WTC11 (cell line): ENCODE measurements at regions of chr2 and their contacts with region 1.

Region 1: DNA sequence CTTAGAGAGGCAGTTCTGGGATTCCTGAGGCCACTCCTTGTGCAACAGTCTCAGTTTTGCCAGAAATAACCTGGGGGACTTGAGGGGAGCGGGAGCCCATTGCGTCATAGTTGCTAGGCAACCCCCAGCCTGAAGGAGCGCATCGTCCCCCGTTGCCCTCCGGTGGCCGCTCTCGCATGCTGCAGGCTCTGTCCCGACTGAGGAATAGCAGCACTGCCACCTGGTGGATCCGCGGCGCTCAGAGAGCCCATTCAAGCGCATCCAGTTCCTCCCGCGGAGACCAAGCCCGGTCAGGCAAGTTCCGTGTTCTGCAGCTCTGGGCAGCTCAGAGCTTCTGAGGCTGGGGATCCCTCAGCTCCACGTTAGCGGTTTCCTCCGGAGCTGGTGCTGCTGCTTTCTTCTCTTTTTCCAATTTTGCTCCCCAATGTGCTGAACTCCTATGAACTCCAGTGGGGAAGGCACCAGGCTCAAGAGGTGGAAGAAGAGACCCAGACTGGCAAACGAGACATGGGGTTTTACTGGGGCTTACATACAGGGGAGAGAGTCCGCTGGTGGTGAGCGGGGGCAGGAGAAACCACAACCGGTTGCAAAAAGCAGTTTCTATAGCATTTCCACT is 15.1 kb downstream of the SLC4A3 start:
- DNase-seq: peak; percentile 99
- ATAC-seq: peak; percentile 91
- H3K4me3 Mint-ChIP-seq: peak overlapping the region; percentile 26; the same call in 1 of the 2 replicates
- H3K27ac Mint-ChIP-seq: no peak overlapping the region
- H3K4me1 Mint-ChIP-seq: peaks cover 27% of the 10 kb centered on the region
- H3K27me3 Mint-ChIP-seq: peaks cover 6% of the 10 kb centered on the region; the same call in 1 of the 2 replicates
- CTCF ChIP-seq: peak; percentile 88

Region 2: GRCh38 chr2:219430633-219431615 is 211.6 kb before region 1 on chr2:
- CTCF ChIA-PET with region 1: no interaction called
- POLR2A ChIA-PET with region 1: no interaction called
- DNase-seq: no peak
- ATAC-seq: peak; percentile 36
- H3K4me3 Mint-ChIP-seq: no peak overlapping the region
- H3K27ac Mint-ChIP-seq: peak overlapping the region; percentile 69; the same call in 1 of the 2 replicates
- H3K4me1 Mint-ChIP-seq: peaks cover 8% of the 10 kb centered on the region
- H3K27me3 Mint-ChIP-seq: peaks cover 20% of the 10 kb centered on the region
- CTCF ChIP-seq: no peak

Region 3: GRCh38 chr2:219537657-219538488 is 104.7 kb before region 1 on chr2:
- CTCF ChIA-PET with region 1: interaction called, 17 read pairs
- POLR2A ChIA-PET with region 1: no interaction called
- DNase-seq: peak; percentile 51
- ATAC-seq: peak; percentile 38
- H3K4me3 Mint-ChIP-seq: no peak overlapping the region
- H3K27ac Mint-ChIP-seq: no peak overlapping the region
- H3K4me1 Mint-ChIP-seq: peaks cover 27% of the 10 kb centered on the region
- H3K27me3 Mint-ChIP-seq: no peaks in the 10 kb centered on the region; the same call in none of the 2 replicates
- CTCF ChIP-seq: no peak

Region 4: DNA sequence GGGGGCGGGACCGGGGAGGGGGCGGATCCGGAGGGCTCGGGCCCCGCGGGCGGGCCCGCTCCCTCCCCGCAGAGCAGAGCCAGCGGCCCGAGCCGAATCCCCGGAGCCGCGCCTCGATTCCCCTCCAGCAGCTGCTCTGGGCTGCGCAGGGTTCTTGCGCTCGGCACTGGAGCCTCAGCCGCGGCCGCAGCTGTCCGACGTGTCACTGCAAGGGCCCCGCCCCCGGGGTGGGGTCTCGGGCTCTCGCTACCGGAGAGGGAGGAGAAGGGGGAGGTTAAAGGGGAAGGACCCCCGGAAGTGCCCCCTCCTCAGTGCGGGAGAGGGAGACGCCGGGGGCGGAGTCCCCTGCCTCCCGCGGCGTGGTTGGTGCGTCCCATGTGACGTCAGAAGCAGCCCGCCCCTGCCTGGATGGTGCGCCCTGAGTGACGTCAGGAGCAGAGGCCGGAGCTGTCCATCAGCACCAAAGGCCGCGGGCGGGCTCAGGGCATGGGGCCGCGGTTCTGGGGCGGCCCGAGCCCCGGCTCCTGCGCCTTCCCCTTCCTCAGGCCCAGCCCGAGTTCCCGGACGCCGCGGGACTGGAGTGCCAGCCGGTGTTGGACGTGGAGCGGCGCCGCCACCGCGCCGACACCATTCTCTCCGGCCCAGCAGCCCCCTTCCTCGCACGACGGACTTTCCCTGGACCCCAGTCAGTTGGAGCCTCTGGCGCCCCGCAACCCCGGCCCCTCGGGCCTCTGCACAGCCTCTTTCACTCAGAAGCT is 98.8 kb before region 1 on chr2 and contains the starts of genes CHPF and TMEM198:
- CTCF ChIA-PET with region 1: interaction called, 17 read pairs
- POLR2A ChIA-PET with region 1: no interaction called
- DNase-seq: peak; percentile 99
- ATAC-seq: peak; percentile 84
- H3K4me3 Mint-ChIP-seq: peak within 1 kb of the TSS; percentile 86
- H3K27ac Mint-ChIP-seq: no peak within 1 kb of the TSS
- H3K4me1 Mint-ChIP-seq: peaks cover 18% of the 10 kb centered on the region
- H3K27me3 Mint-ChIP-seq: peaks cover 28% of the 10 kb centered on the region
- CTCF ChIP-seq: no peak
- total RNA-seq, gene CHPF: 84.3 to 97.0 TPM (median 84.8 TPM) in 3 replicates
- total RNA-seq, gene TMEM198: 7.1 to 8.1 TPM (median 7.3 TPM) in 3 replicates

Region 5: GRCh38 chr2:219571311-219572236 is 71.0 kb before region 1 on chr2 and contains the start of gene OBSL1:
- CTCF ChIA-PET with region 1: interaction called, 10 read pairs
- POLR2A ChIA-PET with region 1: no interaction called
- DNase-seq: peak; percentile 88
- ATAC-seq: peak; percentile 79
- H3K4me3 Mint-ChIP-seq: peak within 1 kb of the TSS; percentile 49
- H3K27ac Mint-ChIP-seq: peak within 1 kb of the TSS; percentile 90
- H3K4me1 Mint-ChIP-seq: peaks cover 64% of the 10 kb centered on the region
- H3K27me3 Mint-ChIP-seq: peaks cover 27% of the 10 kb centered on the region
- CTCF ChIP-seq: no peak
- total RNA-seq, gene OBSL1: 159 to 221 TPM (median 213 TPM) in 3 replicates

Region 6: GRCh38 chr2:219619235-219619634 is 23.3 kb before region 1 on chr2:
- CTCF ChIA-PET with region 1: interaction called, 63 read pairs
- POLR2A ChIA-PET with region 1: interaction called, 3 read pairs
- DNase-seq: no peak
- ATAC-seq: peak; percentile 79
- H3K4me3 Mint-ChIP-seq: no peak overlapping the region
- H3K27ac Mint-ChIP-seq: no peak overlapping the region
- H3K4me1 Mint-ChIP-seq: no peaks in the 10 kb centered on the region
- H3K27me3 Mint-ChIP-seq: peaks cover 2% of the 10 kb centered on the region
- CTCF ChIP-seq: no peak

Region 7: DNA sequence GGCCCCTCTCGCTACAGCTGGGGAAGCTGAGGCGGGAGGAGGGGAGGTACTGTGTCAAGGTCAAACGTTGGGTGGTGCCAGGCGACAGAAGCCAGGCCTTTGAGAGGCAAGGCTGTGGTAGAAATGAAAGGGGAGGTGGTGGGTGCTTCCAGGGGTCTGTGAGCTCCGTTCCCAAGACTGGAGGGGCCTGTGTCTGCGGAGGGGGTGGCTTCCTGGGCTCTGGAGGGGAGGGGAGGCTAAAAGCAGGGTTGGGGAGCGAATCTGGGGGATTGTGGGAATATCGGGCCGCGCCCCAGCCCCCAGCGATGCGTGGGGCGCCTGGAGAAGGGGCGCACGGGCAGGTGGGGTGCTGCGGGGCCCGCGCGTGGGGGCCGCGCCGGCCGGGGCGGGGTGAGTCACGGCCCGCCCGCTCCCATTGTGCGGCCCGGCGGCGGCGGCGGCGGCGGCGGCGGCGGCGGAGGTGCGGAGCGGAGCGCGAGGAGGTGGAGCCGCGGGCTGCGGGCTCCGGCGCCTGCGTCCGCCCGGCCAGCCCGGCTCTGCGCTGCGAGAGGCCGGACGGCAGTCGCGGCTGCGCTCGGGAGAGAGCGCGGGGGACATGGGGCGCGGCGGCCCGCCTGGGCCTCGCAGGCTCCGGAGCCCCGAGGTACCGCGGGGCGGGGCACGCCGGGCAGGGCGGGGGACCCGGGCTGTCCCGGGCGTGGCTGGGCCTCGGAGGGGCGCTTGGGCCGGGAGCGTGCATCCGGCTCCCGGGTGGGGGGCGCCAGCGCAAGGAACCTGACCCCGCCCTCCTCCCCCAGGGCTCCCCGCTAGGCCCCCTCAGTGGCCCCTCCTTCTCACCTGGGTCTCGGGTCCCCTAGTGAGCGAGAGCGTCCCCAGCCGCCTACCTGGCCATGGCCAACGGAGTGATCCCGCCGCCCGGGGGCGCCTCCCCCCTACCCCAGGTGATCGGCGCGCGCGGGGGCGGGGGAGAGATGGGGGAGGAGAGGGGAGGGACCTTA is 15.2 kb before region 1 on chr2 and contains the start of gene SLC4A3:
- CTCF ChIA-PET with region 1: interaction called, 63 read pairs
- POLR2A ChIA-PET with region 1: interaction called, 4 read pairs
- DNase-seq: peak; percentile 40
- ATAC-seq: peak; percentile 76
- H3K4me3 Mint-ChIP-seq: peak within 1 kb of the TSS; percentile 85
- H3K27ac Mint-ChIP-seq: peak within 1 kb of the TSS; percentile 57; the same call in 1 of the 2 replicates
- H3K4me1 Mint-ChIP-seq: peaks cover 6% of the 10 kb centered on the region
- H3K27me3 Mint-ChIP-seq: peaks cover 19% of the 10 kb centered on the region
- CTCF ChIP-seq: no peak
- total RNA-seq, gene SLC4A3: 7.8 to 9.9 TPM (median 8.7 TPM) in 3 replicates

Region 8: DNA sequence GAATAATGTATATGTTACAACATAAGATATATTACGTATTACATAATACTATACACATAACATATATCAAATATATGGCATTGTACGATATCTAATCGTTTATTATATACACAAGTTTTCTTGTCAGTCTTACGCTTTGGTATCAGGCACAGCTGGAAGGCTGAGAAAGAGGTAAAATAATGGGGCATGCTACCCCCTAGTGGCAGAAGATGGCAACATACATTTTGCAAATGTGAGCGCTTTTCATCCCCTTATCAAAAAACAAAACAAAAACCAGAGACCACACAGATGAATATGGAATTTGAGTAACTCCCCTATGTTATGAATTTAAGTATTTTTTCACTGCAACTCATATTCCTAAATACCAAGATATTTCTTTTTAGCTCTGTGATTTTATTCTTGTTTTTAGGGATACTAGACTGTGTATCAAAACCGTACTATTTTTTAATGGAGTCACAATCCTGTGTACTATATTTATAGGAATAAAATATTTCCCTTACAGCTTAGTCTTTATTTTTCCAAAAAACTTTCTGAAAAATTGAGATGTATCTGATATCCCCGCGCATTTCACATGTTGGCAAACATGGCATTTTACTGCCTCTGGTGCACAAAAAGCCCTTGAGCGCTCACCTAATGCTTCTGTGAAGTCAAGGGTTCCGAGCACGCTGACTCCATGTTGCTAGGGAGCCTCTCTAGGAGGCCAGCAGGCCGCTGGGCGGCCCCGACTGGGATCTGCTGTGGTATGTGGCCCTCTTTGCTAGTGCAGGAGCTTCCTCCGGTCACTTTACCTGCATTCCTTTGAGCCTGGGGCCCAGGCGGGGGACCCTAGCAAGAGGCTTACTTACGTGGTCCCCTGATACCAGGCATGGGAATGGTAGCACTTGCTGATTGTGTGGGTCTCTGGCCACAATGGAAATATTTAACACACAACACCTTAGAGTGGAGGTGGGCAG is 47.4 kb after region 1 on chr2:
- CTCF ChIA-PET with region 1: interaction called, 72 read pairs
- POLR2A ChIA-PET with region 1: interaction called, 3 read pairs
- DNase-seq: peak; percentile 55
- ATAC-seq: peak; percentile 34
- H3K4me3 Mint-ChIP-seq: no peak overlapping the region
- H3K27ac Mint-ChIP-seq: no peak overlapping the region; the same call in 1 of the 2 replicates
- H3K4me1 Mint-ChIP-seq: peaks cover 51% of the 10 kb centered on the region
- H3K27me3 Mint-ChIP-seq: no peaks in the 10 kb centered on the region; the same call in 1 of the 2 replicates
- CTCF ChIP-seq: peak; percentile 70